Common myeloid progenitor, CD34-positive (primary cell): ENCODE measurements at regions of chr9 and their contacts with region 1.

Region 1: DNA sequence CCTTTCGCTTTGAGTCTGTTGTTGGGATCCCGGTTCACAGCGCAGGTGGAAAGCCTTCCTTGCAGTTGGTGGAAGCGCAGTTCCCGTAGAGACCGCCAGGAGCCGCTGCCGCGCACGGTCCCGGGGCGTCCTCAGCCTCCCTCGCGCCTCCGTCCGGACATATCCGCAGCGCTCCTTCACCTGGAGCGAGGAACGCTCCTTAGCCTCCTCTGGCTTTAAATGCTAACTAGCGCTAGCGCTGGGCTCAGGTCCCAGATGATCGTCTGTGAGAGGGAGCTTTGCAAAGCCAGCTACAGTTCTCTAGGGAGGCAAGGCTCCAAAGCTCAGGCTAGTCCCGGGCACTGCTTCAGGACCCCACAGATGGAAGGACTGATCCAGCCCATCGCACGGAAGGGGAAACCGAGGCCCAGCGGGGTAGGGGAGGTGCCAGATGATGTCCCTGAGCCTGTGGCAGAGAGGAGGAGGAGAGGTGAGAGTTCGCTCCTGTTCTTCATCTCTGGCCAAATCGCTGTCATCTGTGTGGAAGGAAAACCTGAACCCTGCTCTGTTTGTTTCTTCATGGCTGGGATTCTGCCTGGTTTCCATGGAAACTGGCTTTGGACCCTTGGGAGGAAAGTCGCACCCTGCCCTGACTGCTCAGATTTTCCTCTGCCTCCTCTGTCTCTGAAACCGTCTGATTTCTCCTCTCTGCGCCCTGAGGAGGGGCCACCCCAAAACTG is 31.4 kb downstream of the COL15A1 start:
- DNase-seq: peak; percentile 66 to 78 (median 71)
- H3K4me3 ChIP-seq: peak overlapping the region in 2 of 7 experiments; percentile 43 to 62
- H3K27ac ChIP-seq: no peak overlapping the region
- H3K4me1 ChIP-seq: peaks cover 0 to 9% (median 5%) of the 10 kb centered on the region in 4 experiments
- H3K27me3 ChIP-seq: peaks cover 0 to 14% (median 0%) of the 10 kb centered on the region in 5 experiments

Region 2: DNA sequence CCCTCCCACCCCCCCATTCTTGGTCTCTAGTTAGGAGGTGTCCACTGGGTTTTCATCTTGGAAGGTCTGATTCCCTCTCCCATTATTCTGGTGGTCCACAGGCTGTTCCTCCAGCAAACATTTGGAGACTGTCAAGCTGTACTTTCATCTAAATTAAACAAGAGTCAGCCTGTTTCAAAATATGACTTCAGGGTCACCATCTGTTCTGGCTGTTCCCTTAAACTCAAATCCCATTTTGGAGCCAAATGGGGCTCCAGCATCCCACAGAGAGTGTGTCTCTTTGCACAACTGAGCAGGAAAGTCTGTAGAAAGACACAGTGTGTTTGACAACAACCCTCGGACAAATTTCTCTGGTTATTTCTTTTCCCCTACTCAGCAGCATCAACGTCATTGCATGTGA is 11.0 kb before region 1 on chr9:
- CTCF ChIA-PET with region 1: interaction called, 10 read pairs
- POLR2A ChIA-PET with region 1: no interaction called
- DNase-seq: no peak
- H3K4me3 ChIP-seq: no peak overlapping the region
- H3K27ac ChIP-seq: no peak overlapping the region
- H3K4me1 ChIP-seq: no peaks in the 10 kb centered on the region
- H3K27me3 ChIP-seq: peaks cover 0 to 9% (median 2%) of the 10 kb centered on the region in 5 experiments